ENCODE measurements at regions of chr20 and their contacts with region 1.

Region 1: DNA sequence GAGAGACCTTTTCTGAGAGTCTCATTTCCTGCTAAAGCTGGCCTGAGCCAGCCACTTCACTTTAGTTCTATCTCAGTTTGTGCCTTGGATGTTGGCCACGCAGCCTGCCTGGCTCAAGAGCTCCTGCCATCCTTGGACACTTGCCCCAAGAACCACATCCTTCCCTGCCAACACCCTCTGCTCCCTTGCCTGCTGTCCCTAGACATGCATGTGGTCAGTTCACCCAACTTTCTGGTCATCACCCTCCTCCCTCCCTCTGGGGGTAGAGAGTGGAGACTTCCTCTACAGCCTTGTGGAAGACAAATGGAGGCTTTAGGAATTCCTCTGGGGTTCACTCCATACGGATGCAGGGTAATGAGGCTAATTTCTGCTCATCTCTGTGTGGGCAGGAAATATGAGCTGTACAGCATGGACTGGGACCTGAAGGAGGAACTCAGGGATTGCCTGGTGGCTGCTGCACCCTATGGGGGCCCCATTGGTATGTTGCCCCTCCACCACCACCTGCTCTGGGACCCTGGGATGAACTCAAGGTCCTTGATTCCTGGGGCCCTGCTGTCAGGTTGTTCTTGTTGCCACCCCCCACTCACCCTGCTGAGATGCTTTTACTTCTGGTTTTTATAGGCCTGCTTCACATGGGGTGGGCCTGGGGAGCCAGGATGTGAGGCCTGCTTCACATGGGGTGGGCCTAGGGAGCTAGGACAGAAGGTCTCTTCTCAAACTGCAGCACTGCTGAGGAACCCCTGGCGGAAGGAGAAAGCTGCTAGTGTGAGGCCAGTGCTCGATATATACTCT is 13.8 kb upstream of the PTPRA start:
- DNase-seq: no peak
- ATAC-seq: peak in 3 of 4 donors; percentile 46 to 75 (median 48)
- H3K4me3 ChIP-seq: no peak overlapping the region
- H3K27ac ChIP-seq: no peak overlapping the region
- H3K4me1 ChIP-seq: peaks cover 5% of the 10 kb centered on the region
- H3K27me3 ChIP-seq: no peaks in the 10 kb centered on the region
- CTCF ChIP-seq: no peak

Region 2: DNA sequence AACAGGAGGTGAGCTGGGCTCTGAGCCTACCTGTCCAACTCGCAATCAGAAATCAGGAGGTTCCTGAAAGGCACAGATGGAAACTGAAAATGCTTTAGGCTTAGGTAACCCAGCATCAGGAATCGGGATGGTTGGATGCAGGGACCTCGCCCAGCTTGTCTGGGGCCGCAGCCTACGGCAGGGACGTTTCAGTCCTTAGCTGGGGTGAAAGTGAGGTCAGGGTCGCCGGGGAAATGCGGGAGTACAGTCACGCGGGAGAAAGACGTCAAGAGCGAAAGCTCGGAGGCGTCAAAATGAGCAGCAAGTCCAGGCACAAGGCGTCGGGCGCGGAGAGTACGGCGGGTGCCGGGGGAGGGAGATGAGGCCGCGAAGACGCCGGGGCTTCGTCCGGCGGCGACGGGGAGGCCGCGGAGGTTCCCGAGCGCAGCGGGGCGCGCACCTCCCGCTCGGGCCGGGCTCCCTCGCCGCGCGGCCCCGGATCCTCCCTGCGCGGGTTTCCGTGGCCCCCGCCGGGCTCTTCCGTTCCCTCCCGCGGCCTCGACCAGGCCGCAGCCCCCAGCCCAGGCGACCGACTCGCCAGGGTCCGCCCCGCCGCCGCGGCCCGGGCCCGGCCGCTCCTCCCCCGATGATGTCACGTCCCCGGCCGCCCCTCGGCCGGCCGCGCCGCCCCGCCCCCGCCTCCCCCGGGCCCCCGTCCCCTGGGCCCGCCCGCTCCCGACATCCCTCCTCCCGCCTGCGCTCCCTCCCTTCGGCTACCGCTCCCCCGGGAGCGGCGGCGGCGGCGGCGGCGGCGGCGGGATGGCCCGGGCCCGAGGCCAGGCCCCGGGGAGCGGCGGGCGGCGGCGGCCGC is 167.3 kb before region 1 on chr20 and contains the start of gene EBF4:
- intact Hi-C with region 1: loop called in 1 of 2 experiments (anchors 10 kb)
- DNase-seq: peak in 1 of 2 donors; percentile 57
- ATAC-seq: peak in 3 of 4 donors; percentile 31 to 42 (median 38)
- H3K4me3 ChIP-seq: peak within 1 kb of the TSS; percentile 60
- H3K27ac ChIP-seq: peak within 1 kb of the TSS; percentile 60
- H3K4me1 ChIP-seq: no peaks in the 10 kb centered on the region
- H3K27me3 ChIP-seq: peaks cover 0 to 70% (median 15%) of the 10 kb centered on the region in 3 donors
- CTCF ChIP-seq: no peak
- total RNA-seq, gene EBF4: 1.2 to 1.9 (median 1.5) TPM

Region 3: DNA sequence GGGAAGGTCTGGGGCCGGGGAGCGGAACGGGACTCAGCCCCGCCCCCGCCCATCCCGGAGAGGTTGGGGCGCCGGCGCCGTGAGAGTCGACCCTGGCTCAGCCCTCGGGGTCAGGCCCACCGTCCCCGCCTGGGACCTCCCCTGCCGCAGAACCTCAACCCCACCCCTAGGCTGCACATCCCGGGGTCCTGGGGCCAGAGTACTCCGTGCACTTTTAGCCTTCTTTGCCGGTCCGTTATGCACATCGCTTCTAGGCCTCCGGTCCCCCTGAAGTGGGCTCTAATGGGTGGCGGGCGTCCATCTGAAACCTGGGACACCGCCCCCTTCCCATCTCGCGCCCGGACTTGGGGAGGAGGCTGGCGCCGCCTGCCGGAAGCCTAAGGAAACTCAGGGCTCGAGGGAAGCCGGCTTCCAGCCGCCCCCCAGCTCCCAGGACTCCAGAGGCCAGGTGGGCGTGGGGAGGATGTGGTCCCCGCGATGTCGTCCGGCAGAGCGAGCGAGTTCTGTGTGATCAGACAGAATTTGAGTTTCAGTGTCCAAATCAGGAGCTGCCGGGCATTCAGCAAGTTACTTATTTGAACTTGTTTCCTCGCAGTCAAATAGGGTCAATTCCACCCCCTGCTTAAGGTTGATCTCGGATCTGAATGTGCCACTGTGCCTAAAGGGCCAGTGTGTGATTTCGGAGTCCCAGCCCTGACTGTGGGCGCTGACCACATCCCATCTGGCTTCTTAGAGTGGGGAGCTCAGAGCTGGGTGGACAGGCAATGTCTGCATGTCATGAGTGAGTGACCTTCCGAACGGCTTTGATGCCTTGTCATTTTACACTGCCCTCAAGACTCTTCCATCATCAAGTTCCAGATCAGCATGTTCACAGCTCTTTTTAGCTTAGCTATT is 106.7 kb before region 1 on chr20:
- intact Hi-C with region 1: loop called in 1 of 2 experiments (anchors 10 kb)
- DNase-seq: no peak
- ATAC-seq: no peak
- H3K4me3 ChIP-seq: peak overlapping the region; percentile 55
- H3K27ac ChIP-seq: no peak overlapping the region
- H3K4me1 ChIP-seq: peaks cover 6% of the 10 kb centered on the region
- H3K27me3 ChIP-seq: peaks cover 0 to 90% (median 40%) of the 10 kb centered on the region in 3 donors
- CTCF ChIP-seq: peak; percentile 45